ENCODE measurements at regions of chr5 and their contacts with region 1.

Region 1: DNA sequence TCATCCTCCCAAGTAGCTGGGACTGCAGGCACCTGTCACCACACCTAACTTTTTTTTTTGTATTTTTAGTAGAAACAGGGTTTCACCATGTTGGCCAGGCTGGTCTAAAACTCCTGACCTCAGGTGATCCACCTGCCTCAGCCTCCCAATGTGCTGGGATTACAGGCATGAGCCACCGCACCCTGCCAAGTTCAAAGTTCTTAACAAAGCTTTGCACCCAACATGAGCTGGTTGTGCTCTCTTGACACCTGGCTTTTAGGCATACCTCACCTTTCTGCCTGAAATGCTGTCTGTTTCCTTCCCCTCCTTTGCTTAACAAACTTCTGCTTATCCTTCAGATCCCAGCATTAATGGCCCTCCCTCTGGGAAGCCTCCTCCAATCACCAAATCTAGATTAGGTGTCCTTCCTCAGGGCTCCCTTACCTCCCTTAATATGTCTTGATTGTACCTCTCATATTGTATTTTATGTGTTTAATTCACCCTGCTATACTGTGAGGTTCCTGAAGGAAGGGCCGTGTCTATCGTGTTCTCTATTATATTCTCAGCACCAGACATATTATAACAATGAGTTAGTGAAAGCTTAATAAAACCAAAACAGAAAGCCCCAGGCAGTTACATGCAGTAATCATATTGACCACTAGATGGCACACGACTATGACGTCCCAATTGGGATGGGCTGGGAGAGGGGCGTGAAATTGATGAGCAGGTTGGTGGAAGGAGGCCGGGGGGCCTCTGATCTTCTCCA is 62.9 kb upstream of the PPARGC1B start:
- DNase-seq: peak; percentile 44
- ATAC-seq: peak; percentile 80
- H3K4me3 Mint-ChIP-seq: no peak overlapping the region
- H3K27ac Mint-ChIP-seq: no peak overlapping the region; the same call in 1 of the 2 replicates
- H3K4me1 Mint-ChIP-seq: no peaks in the 10 kb centered on the region; the same call in 1 of the 2 replicates
- H3K27me3 Mint-ChIP-seq: no peaks in the 10 kb centered on the region; the same call in 1 of the 2 replicates
- CTCF ChIP-seq: peak; percentile 86

Region 2: DNA sequence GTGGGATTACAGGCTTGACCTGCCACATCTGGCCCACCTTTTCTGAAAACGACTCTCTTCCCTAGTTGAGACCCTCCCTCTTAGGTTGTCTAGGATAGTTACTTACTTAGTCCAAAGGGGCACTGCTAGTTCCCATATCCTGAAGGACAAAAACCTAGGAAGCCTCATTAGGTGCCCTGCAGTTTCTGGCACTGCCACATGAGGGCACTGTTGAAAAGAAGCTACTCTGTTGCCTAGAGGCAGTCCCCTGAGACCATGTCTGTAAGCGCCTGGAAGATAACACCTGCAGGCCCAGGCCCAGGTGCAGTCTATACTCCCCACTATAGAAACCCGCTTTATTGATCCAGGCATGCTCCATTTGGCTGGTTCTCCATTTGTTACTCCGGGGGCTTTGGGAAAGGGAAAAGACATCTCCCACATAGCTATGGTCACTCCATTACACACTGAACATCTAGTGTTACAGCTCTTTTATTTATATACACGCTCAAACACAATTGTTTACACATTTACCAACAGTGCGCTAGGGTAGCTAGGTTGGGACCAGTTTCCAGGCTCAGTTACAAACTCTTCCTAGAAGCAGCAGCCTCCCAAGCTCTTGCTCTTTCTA is 10.6 kb before region 1 on chr5:
- CTCF ChIA-PET with region 1: interaction called, 23 read pairs
- POLR2A ChIA-PET with region 1: no interaction called
- DNase-seq: peak; percentile 93
- ATAC-seq: peak; percentile 89
- H3K4me3 Mint-ChIP-seq: no peak overlapping the region
- H3K27ac Mint-ChIP-seq: no peak overlapping the region
- H3K4me1 Mint-ChIP-seq: peaks cover 16% of the 10 kb centered on the region
- H3K27me3 Mint-ChIP-seq: no peaks in the 10 kb centered on the region
- CTCF ChIP-seq: peak; percentile 90

Region 3: DNA sequence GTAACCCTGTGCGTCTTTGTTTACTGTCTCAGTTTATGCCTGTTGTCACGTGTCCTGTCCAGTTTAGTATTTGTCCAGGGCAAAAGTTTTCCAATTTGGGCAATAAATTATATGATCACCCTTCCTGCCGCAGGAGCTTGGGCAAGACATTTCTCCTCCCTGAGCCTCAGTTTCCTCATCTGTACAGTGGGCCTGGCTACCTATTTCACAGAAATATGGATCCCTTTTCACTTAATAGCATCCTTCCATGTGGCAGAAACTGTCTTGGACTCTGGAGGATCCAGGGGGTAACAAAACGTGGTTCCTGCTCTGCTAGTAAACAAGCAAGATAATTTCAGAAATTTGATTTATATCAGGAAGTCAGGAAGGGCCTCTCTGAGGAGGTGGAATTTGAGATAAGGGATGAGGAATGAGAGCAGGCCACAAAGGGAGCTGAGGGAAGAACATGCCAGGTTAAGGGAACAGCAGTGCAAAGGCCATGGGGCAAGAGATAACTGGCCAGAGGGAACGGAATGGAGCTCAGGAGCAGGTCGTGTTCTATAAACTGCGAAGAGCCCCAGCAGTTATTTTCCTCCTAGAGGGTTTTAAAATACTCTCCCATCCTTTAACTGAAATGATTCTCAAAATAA is 47.7 kb after region 1 on chr5:
- CTCF ChIA-PET with region 1: interaction called, 10 read pairs
- POLR2A ChIA-PET with region 1: no interaction called
- DNase-seq: no peak
- ATAC-seq: no peak
- H3K4me3 Mint-ChIP-seq: no peak overlapping the region
- H3K27ac Mint-ChIP-seq: no peak overlapping the region
- H3K4me1 Mint-ChIP-seq: peaks cover 24% of the 10 kb centered on the region
- H3K27me3 Mint-ChIP-seq: no peaks in the 10 kb centered on the region; the same call in none of the 2 replicates
- CTCF ChIP-seq: no peak

Region 4: DNA sequence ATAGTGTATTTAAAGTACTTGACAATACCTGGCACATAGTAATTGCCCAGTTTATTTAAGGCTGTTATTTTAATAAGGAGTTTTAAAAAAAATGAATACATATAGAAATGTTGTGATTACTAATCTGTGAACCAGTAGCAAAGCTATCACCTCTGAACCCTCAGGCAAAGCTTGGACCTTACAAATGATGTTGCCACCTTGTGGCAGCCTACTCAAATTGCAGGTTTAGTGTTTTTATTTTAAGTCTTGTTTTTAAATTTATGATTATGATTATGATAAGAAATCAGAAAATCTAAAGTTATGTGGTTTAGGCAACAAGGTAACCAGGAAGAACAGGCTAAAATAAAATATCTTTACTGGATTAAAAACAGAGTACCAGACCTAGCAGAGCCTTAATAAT is 98.7 kb after region 1 on chr5:
- CTCF ChIA-PET with region 1: interaction called, 10 read pairs
- POLR2A ChIA-PET with region 1: no interaction called
- DNase-seq: no peak
- ATAC-seq: no peak
- H3K4me3 Mint-ChIP-seq: no peak overlapping the region
- H3K27ac Mint-ChIP-seq: no peak overlapping the region
- H3K4me1 Mint-ChIP-seq: peaks cover 15% of the 10 kb centered on the region
- H3K27me3 Mint-ChIP-seq: no peaks in the 10 kb centered on the region
- CTCF ChIP-seq: peak; percentile 42

Region 5: DNA sequence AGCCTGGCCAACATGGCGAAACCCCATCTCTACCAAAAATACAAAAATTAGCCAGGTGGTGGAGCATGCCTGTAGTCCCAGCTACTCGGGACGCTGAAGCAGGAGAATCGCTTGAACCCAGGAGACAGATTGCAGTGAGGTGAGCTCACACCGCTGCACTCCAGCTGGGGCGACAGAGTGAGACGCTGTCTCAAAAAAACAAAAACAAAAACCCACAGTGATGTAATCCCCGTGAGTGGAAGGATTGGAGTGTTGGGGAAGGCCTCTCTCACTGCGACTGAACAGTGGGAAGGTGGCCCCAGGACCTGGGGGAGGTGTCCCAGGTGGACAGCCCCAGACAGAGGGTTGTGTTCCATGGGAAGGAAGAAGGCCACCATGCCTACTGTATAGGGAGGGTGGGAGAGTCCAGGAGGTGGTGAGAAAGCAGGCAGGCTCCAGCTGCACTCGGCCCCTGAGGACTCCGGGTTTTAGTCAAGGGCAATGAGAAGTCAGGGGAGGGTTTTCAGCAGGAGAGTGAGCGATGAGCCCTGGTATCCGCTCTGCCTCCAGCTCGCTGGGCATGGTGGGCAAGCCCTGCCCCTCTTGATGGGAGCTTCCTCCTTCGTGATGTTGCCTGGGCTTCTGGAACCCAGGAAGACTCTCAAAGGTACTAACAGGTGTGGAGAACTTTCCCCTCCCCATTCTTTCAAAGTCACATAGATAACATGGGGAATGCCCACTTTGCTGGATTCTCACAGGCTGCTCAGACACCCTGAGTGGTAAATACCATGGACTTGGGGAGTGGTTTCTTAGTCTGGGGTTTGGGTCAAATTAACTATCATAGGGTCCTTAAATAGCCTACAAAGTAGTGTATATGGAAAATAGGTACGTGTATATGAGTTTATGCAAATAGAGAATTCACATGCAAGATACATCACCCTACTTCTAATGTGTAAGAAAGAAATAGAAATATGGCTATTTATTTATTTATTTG is 137.5 kb after region 1 on chr5:
- CTCF ChIA-PET with region 1: interaction called, 12 read pairs
- POLR2A ChIA-PET with region 1: no interaction called
- DNase-seq: no peak
- ATAC-seq: no peak
- H3K4me3 Mint-ChIP-seq: no peak overlapping the region
- H3K27ac Mint-ChIP-seq: peak overlapping the region; percentile 89
- H3K4me1 Mint-ChIP-seq: peaks cover 65% of the 10 kb centered on the region
- H3K27me3 Mint-ChIP-seq: no peaks in the 10 kb centered on the region
- CTCF ChIP-seq: no peak

Region 6: DNA sequence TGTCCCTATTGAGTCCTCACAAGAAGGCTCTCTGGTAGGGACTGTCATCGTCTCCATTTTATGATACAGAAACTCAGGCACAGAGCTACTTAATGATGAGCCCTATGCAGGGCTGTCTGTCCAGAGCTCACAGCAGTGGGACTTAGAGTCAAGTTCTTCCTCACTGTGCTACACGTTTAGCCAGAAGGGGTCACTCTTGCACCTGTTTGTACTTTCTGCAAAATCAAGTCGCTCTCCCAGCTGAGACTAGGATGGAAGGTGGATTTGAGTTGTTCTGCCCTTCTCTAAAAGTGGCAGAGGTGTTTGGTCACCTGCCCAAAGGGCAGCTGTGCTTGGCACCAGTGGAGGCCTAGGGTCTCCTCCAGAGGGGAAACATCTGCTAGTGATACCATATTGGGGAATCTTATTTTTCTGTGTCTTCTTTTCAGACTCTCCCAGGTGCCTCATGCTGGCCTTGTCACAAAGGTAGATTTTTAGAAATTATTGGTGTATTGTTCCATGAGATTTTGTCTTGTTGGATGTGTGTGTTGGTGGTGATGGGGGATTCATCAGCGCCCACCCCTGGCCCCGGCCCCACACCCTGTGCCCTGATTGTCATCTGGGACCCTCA is 167.1 kb after region 1 on chr5:
- CTCF ChIA-PET with region 1: interaction called, 19 read pairs
- POLR2A ChIA-PET with region 1: no interaction called
- DNase-seq: peak; percentile 71
- ATAC-seq: peak; percentile 70
- H3K4me3 Mint-ChIP-seq: no peak overlapping the region
- H3K27ac Mint-ChIP-seq: no peak overlapping the region
- H3K4me1 Mint-ChIP-seq: no peaks in the 10 kb centered on the region
- H3K27me3 Mint-ChIP-seq: no peaks in the 10 kb centered on the region
- CTCF ChIP-seq: peak; percentile 35

Region 7: DNA sequence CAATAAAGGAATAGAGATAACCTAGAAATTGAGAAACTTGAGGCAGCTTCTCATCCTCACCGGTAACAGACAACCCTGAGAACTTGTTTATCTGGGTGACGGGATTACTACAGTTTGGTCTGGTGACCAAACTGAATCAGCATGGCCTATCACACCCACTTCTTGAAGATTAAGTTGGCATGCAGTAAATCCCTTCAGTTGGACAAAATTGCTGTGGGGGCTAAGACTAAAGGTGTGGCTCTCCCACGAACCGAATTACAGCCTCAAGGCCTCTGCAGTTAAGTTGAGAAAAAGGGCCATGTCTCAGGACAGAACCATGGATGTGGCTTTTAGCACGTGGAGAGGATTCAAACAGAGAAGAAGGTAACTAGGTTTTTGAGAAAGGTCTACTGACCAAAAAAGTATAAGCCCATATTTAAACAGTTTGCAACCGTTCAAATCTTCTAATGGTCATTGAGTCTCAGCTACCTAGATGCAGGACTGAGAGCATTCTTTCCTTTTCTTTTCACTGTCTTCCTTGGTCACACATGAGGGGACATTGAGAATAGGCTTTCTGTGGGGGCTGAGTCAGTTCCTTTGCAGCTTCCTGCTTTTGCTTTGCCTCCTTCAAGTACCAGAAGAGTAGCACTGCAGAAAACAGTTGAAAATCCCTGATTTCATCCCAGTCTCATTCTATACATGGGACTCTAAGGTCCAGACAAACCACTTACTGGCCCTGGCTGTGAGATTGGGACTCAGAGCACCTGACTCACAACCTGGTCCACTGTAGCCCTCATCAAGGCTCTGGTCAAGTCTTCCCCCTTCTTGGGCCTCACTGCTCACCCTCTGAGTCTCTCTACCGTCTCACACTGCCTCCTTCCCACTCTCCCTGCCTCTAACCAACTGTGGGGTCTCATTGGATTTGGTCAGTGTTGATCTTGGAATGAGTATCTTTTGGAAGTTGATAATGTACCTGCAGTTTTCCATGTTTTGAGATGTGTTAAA is 246.5 kb after region 1 on chr5:
- CTCF ChIA-PET with region 1: no interaction called
- POLR2A ChIA-PET with region 1: no interaction called
- DNase-seq: no peak
- ATAC-seq: no peak
- H3K4me3 Mint-ChIP-seq: no peak overlapping the region
- H3K27ac Mint-ChIP-seq: no peak overlapping the region
- H3K4me1 Mint-ChIP-seq: peaks cover 12% of the 10 kb centered on the region
- H3K27me3 Mint-ChIP-seq: no peaks in the 10 kb centered on the region
- CTCF ChIP-seq: no peak